Activated CD4-positive, alpha-beta T cell treated with anti-CD3 and anti-CD28 coated beads for 36 hours (primary cell): ENCODE measurements at regions of chr4 and their contacts with region 1.

Region 1: DNA sequence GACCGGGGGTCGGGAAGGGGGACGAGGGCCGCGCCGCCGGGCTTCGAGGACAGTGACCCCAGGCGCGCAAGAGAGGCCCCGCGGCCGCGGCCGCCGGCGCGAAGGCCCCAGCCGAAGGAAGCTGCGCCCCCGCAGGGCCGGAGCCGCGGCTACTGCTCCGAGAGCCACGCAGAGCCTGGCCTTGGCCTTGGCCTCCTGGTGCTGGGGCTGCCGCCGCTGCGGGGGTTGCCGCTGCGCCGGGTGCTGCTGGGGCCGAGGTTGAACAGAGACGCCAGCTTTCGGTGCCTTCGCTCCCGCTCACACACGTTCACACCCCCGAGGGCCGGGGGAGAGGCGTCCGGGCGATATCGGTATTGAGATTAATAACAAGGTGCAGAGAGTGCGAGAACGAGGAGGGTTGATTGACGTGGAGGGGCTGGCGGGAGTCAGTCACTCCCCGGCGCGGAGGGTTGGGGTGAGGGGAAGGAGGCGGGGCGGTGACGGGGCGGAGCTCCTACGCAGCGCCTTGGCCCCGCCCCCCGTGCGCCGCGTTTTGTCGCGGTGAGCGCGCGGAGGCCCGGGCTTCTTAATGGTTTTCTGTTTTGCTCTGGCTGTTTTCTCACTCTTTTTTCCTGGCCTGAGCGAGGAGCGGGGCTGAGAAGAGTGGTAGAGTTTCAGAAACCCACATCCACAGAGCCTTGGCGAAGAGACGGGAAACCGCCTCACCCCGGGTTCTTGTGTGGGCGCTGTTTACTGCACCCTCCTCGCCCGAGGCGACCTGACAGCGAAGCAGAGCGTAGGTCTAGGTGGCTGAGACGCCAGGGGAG is 878 bp upstream of the CNOT6L start:
- DNase-seq: peak; percentile 98
- ATAC-seq: peak; percentile 82
- H3K4me3 Mint-ChIP-seq: peak overlapping the region; percentile 99
- H3K27ac Mint-ChIP-seq: peak overlapping the region; percentile 97
- H3K4me1 Mint-ChIP-seq: peaks cover 46% of the 10 kb centered on the region
- H3K27me3 Mint-ChIP-seq: no peaks in the 10 kb centered on the region

Region 2: DNA sequence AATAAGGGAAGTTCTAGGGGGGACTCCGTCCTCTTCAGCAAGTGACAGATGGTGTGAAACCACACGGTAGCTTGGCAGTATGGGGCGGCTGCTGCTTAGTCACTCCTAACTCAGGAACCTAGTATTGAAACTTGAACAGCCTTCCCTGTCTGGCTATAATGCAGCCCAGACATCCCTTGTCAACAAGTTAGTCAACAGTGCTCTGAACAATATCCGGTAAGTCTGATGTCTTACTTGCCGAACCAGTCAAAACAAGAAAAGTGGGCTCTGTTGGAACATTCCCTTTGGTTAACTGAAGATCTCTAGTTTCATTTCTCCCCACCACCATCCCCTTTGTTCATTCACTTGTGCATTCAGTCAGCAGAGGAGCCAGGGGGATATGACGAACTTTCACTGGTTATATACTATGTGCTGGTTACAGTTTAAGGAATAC is 233.1 kb before region 1 on chr4:
- CTCF ChIA-PET with region 1: no interaction called
- POLR2A ChIA-PET with region 1: interaction called, 7 read pairs
- intact Hi-C with region 1: loop called in 1 of 2 experiments (anchors 2 kb)
- DNase-seq: peak; percentile 87
- ATAC-seq: peak; percentile 94
- H3K4me3 Mint-ChIP-seq: peak overlapping the region; percentile 54
- H3K27ac Mint-ChIP-seq: peak overlapping the region; percentile 84
- H3K4me1 Mint-ChIP-seq: peaks cover 66% of the 10 kb centered on the region
- H3K27me3 Mint-ChIP-seq: peaks cover 16% of the 10 kb centered on the region

Region 3: DNA sequence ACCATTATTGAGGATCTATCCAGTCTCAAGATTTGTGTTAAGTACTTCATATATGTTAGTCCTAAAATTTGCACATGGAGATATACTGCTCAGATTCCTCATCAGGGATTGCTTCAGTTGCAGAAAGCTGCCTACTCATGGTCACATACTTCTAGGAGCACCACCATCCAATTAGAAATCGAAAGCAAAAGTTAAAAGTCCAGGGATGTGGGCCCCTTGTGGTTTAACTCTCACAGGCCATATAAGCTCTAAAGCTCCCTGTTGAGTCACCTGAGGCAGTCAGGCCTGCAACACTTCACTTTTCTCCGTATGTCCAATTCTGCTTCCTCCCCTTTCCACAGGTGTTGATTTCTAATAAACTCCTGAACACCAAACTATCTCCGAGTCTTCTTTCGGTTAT is 85.1 kb before region 1 on chr4:
- CTCF ChIA-PET with region 1: no interaction called
- POLR2A ChIA-PET with region 1: interaction called, 4 read pairs
- intact Hi-C with region 1: loop called (anchors 2 to 5 kb)
- DNase-seq: peak; percentile 58
- ATAC-seq: peak; percentile 98
- H3K4me3 Mint-ChIP-seq: peak overlapping the region; percentile 70
- H3K27ac Mint-ChIP-seq: peak overlapping the region; percentile 89
- H3K4me1 Mint-ChIP-seq: peaks cover 55% of the 10 kb centered on the region
- H3K27me3 Mint-ChIP-seq: no peaks in the 10 kb centered on the region

Region 4: GRCh38 chr4:77843628-77844027 is 23.6 kb after region 1 on chr4:
- CTCF ChIA-PET with region 1: interaction called, 4 read pairs
- POLR2A ChIA-PET with region 1: interaction called, 5 read pairs
- intact Hi-C with region 1: loop called (anchors 1 to 2 kb)
- DNase-seq: no peak
- ATAC-seq: peak; percentile 88
- H3K4me3 Mint-ChIP-seq: no peak overlapping the region
- H3K27ac Mint-ChIP-seq: peak overlapping the region; percentile 56
- H3K4me1 Mint-ChIP-seq: peaks cover 25% of the 10 kb centered on the region
- H3K27me3 Mint-ChIP-seq: no peaks in the 10 kb centered on the region

Region 5: GRCh38 chr4:77862478-77863216 is 42.6 kb after region 1 on chr4 and contains the start of gene MRPL1:
- CTCF ChIA-PET with region 1: interaction called, 25 read pairs
- POLR2A ChIA-PET with region 1: interaction called, 85 read pairs
- intact Hi-C with region 1: loop called (anchors 1 kb)
- DNase-seq: peak; percentile 92
- ATAC-seq: peak; percentile 78
- H3K4me3 Mint-ChIP-seq: peak within 1 kb of the TSS; percentile 98
- H3K27ac Mint-ChIP-seq: peak within 1 kb of the TSS; percentile 100
- H3K4me1 Mint-ChIP-seq: peaks cover 61% of the 10 kb centered on the region
- H3K27me3 Mint-ChIP-seq: peaks cover 2% of the 10 kb centered on the region
- total RNA-seq, gene MRPL1: 61.1 to 70.6 TPM